Activated CD8-positive, alpha-beta memory T cell treated with anti-CD3 and anti-CD28 coated beads, Interleukin-2, amount 10 ng/mL, durations not matched to agents 7 days and 5 days (primary cell): ENCODE measurements at regions of chr12 and their contacts with region 1.

Region 1: DNA sequence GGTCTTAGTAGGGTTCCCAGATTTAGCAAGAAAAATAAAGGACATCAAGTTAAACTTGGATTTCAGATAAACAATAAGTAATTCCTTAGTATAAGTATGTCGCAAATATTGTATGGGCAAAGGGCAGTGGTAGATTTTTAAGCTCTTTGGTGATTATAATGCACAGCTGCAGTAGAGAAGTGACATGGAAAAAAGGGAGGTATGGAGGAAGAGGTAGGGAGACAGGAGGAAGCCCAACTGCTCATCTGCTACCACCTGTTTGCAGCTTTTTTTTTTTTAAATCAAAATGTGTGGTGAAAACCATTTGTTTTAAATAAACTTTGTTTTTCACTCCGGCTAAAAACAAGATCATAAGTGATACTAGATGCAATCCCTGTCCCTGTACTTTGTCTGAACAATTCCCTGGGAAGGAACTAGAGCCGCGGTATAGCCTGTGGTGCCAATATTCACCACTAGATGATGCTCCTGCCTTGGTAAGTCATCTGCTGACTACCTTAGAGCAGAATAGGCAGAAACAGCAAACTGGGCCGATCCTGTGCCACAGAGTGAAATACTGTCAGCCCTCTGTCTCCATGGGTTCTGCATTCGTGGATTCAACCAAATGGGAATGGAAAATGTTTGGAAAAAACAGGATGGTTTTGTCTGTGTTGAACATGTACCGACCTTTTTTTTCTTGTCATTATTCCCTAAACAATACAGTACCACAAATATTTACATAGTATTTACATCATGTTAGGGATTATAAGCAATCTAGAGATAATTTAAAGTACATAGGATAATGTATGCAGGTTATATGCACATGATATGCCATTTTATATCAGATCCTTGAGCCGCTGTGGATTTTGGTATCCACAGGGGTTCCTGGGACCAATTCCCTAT is 62.4 kb upstream of the PLBD1 start:
- DNase-seq: peak; percentile 75
- ATAC-seq: peak; percentile 96
- H3K4me3 Mint-ChIP-seq: no peak overlapping the region
- H3K27ac Mint-ChIP-seq: no peak overlapping the region
- H3K4me1 Mint-ChIP-seq: no peaks in the 10 kb centered on the region
- H3K27me3 Mint-ChIP-seq: peaks cover 16% of the 10 kb centered on the region

Region 2: DNA sequence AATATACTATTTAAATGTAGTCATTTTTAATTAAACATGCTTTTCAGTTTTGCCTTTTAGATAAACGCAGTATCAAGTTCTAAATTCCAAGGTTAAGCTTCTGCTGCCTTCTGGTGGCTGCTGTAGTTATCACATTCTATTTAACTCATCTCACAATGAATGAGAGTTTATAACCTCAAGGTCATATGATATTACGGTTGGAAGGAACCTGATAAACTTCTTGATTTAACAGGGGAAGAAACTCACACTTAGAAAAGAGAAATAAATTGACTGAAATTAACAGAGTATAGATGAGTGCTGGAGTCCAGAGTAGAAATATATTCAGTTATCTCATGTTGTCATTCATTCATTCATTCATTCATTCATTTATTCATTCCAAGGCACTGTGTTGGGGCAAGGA is 34.4 kb after region 1 on chr12:
- CTCF ChIA-PET with region 1: interaction called, 54 read pairs
- DNase-seq: no peak
- ATAC-seq: peak; percentile 51
- H3K4me3 Mint-ChIP-seq: no peak overlapping the region
- H3K27ac Mint-ChIP-seq: no peak overlapping the region
- H3K4me1 Mint-ChIP-seq: peaks cover 11% of the 10 kb centered on the region
- H3K27me3 Mint-ChIP-seq: peaks cover 7% of the 10 kb centered on the region

Region 3: DNA sequence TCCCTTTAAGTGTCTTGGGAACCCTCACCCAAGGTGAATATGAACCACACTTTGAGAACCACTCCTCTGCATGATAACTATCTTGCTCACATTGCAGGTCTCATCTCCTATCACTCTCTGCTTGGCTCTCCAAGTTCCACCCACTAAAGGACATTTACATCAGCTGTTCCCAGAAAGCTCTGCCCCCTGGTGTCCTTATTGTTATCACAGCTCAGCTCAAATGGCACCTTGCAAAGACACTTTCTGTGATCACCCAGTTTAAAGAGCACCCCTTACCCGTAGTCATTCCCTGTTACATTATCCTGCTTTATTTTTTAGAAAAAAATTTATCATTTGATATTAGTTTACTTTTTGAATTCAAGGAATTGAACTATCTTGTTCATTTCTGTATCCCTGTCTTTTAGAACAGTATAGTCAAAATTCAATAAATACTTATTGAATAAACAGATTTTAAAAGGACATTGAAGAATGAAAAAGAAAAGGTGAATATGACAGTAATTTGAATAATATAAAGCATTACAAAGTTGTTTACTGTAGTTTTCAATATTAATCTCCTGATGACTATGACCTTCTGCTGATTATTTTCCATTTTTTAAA is 86.9 kb after region 1 on chr12:
- CTCF ChIA-PET with region 1: interaction called, 19 read pairs
- DNase-seq: peak; percentile 66
- ATAC-seq: peak; percentile 73
- H3K4me3 Mint-ChIP-seq: no peak overlapping the region
- H3K27ac Mint-ChIP-seq: no peak overlapping the region
- H3K4me1 Mint-ChIP-seq: peaks cover 11% of the 10 kb centered on the region
- H3K27me3 Mint-ChIP-seq: peaks cover 17% of the 10 kb centered on the region